OCI-LY7 (cell line): ENCODE measurements at regions of chr2 and their contacts with region 1.

Region 1: DNA sequence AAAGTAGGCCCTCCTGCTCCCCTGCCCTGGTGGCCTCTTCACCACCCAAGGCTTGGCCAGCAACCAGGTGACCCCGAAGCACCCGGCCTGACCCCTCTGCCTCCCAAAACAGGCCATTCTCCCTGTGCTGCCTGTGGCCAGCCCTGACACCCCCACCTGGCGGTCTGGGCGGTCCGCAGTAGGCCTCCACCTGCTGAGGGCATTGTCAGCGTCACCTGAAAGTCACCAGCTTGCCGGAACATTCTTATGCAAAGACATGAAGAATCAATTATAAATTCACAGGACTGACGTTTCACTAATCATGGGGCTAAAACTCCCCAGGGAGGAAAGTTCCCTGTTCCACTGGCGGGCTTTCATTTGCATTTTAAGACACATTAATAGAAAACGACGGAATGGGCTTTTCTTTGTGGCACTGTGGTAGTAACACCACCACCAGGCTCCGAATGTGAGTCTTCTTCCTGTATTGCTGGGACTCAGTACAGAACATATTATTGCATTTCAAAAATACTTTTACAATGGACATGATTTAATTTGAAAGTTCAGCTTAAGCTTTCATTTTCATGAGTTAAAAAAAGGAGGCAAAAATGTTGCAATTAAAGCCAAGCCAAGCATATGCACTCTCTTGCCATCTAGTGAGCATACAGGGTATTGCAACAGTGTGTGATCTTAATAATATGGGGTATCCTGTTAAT is 57.4 kb downstream of the ADI1 start:
- DNase-seq: peak; percentile 77
- H3K4me3 ChIP-seq: peak overlapping the region; percentile 11
- H3K27ac ChIP-seq: peak overlapping the region; percentile 61
- H3K4me1 ChIP-seq: peaks cover 22% of the 10 kb centered on the region
- CTCF ChIP-seq: peak; percentile 99

Region 2: GRCh38 chr2:2846332-2847208 is 615.4 kb before region 1 on chr2:
- CTCF ChIA-PET with region 1: no interaction called
- POLR2A ChIA-PET with region 1: no interaction called
- intact Hi-C with region 1: loop called (anchors 10 kb)
- DNase-seq: no peak
- H3K4me3 ChIP-seq: no peak overlapping the region
- H3K27ac ChIP-seq: no peak overlapping the region
- H3K4me1 ChIP-seq: no peaks in the 10 kb centered on the region
- CTCF ChIP-seq: no peak

Region 3: GRCh38 chr2:3001615-3002560 is 460.1 kb before region 1 on chr2:
- CTCF ChIA-PET with region 1: no interaction called
- POLR2A ChIA-PET with region 1: no interaction called
- intact Hi-C with region 1: loop called (anchors 5 kb)
- DNase-seq: peak; percentile 18
- H3K4me3 ChIP-seq: no peak overlapping the region
- H3K27ac ChIP-seq: no peak overlapping the region
- H3K4me1 ChIP-seq: no peaks in the 10 kb centered on the region
- CTCF ChIP-seq: peak; percentile 58

Region 4: DNA sequence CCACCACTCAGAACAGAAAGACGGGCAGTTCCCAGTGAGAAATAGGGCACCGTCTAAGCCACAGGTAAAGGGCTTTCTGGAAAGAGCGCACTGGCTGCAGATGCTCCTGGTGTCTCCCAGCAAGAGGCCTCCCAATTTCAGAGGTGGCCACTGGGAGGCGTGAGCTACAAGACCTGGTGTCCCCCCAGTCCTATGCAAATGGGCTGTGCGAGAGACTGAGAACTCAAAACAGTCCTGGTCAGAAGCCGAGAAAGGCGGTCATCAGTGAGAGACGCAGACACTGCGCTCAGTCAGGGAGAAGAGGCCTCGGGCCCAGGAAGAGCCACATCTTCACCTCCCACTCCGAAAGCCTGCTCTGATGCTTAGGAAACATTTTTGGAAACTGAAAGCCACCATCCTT is 263.8 kb before region 1 on chr2:
- CTCF ChIA-PET with region 1: no interaction called
- POLR2A ChIA-PET with region 1: no interaction called
- intact Hi-C with region 1: loop called (anchors 10 kb)
- DNase-seq: peak; percentile 21
- H3K4me3 ChIP-seq: no peak overlapping the region
- H3K27ac ChIP-seq: no peak overlapping the region
- H3K4me1 ChIP-seq: peaks cover 12% of the 10 kb centered on the region
- CTCF ChIP-seq: peak; percentile 52